ENCODE measurements at regions of chr12 and their contacts with region 1.

Region 1: DNA sequence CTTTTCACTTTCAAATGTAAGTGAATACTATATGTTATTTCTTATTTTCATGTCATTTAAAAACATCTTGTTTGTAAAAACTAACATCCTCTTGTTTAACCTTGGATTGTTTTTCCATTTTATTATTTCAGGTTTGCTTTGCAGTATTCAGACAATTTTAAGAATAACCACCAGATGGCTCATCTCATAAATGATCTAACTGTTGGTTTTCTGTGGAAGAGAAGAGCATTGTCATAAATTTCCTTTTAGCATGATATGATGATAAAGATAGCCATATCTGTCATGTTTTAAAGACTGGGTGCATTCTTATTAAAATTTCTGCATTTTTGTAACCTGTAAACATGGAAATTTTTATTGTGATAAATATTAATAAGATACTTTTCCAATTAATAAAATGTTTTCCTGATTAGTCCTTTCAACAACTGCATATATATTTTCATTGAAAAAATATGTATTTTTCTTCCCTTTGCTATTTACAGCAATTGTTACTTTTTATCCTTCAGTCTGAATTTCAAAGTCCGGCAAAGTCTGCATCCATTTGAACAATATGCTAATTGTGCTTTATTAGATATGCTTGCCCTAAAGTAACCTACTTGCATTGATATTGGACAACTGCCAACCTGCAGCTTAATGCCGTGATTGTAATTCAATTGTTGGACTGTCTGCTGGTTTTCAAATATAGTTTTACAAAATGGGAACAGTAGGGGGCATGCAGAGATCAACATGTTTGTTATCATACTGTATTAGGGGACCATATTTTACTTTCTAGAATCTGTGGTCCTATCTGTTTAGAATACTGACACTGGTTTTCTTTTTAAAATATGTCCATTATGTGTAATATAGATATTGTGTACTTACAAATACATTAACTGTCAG is 163.4 kb downstream of the GARIN6 start:
- DNase-seq: peak; percentile 51
- H3K4me3 Mint-ChIP-seq: no peak overlapping the region
- H3K27ac Mint-ChIP-seq: no peak overlapping the region
- H3K4me1 Mint-ChIP-seq: no peaks in the 10 kb centered on the region
- H3K27me3 Mint-ChIP-seq: no peaks in the 10 kb centered on the region
- CTCF ChIP-seq: no peak

Region 2: GRCh38 chr12:99984271-99985128 is 173.5 kb after region 1 on chr12 and contains the start of gene ANKS1B:
- CTCF ChIA-PET with region 1: no interaction called
- intact Hi-C with region 1: loop called (anchors 5 kb)
- DNase-seq: peak; percentile 67
- H3K4me3 Mint-ChIP-seq: peak within 1 kb of the TSS; percentile 79
- H3K27ac Mint-ChIP-seq: peak within 1 kb of the TSS; percentile 50
- H3K4me1 Mint-ChIP-seq: peaks cover 8% of the 10 kb centered on the region
- H3K27me3 Mint-ChIP-seq: peaks cover 18% of the 10 kb centered on the region
- CTCF ChIP-seq: no peak
- total RNA-seq, gene ANKS1B: 1.5 and 1.7 TPM in 2 replicates

Region 3: DNA sequence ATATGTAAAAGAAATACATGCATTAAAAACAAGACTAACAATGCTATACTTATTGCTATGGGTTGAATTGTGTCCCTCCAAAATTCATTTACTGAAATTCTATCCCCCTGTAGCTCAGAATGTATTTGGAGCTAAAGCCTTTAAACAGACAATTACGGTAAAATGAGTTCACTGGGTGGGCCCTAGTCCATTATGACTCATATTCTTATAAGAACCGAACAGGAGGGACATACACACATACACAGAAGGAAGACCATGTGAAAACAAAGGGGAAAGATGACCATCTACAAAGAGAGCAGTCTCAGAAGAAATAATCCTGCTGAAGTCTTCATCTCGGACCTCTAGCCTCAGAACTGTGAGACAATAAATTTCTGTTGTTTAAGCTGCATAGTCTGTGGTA is 250.9 kb after region 1 on chr12:
- CTCF ChIA-PET with region 1: no interaction called
- intact Hi-C with region 1: loop called (anchors 5 kb)
- DNase-seq: no peak
- H3K4me3 Mint-ChIP-seq: no peak overlapping the region
- H3K27ac Mint-ChIP-seq: no peak overlapping the region
- H3K4me1 Mint-ChIP-seq: no peaks in the 10 kb centered on the region
- H3K27me3 Mint-ChIP-seq: no peaks in the 10 kb centered on the region
- CTCF ChIP-seq: no peak

Region 4: GRCh38 chr12:100128512-100128908 is 317.6 kb after region 1 on chr12:
- CTCF ChIA-PET with region 1: no interaction called
- intact Hi-C with region 1: loop called (anchors 10 kb)
- DNase-seq: peak; percentile 19
- H3K4me3 Mint-ChIP-seq: no peak overlapping the region
- H3K27ac Mint-ChIP-seq: no peak overlapping the region
- H3K4me1 Mint-ChIP-seq: peaks cover 12% of the 10 kb centered on the region
- H3K27me3 Mint-ChIP-seq: no peaks in the 10 kb centered on the region
- CTCF ChIP-seq: no peak

Region 5: GRCh38 chr12:100200463-100201181 is 389.7 kb after region 1 on chr12 and contains the start of gene ACTR6:
- CTCF ChIA-PET with region 1: no interaction called
- intact Hi-C with region 1: loop called (anchors 10 kb)
- DNase-seq: peak; percentile 95
- H3K4me3 Mint-ChIP-seq: peak within 1 kb of the TSS; percentile 80
- H3K27ac Mint-ChIP-seq: peak within 1 kb of the TSS; percentile 96
- H3K4me1 Mint-ChIP-seq: no peaks in the 10 kb centered on the region
- H3K27me3 Mint-ChIP-seq: no peaks in the 10 kb centered on the region
- CTCF ChIP-seq: no peak
- total RNA-seq, gene ACTR6: 35.2 and 35.4 TPM in 2 replicates

Region 6: GRCh38 chr12:100229058-100229637 is 418.2 kb after region 1 on chr12:
- CTCF ChIA-PET with region 1: interaction called, 6 read pairs
- intact Hi-C with region 1: loop called (anchors 2 kb)
- DNase-seq: peak; percentile 24
- H3K4me3 Mint-ChIP-seq: peak overlapping the region; percentile 19
- H3K27ac Mint-ChIP-seq: peak overlapping the region; percentile 55
- H3K4me1 Mint-ChIP-seq: peaks cover 20% of the 10 kb centered on the region
- H3K27me3 Mint-ChIP-seq: no peaks in the 10 kb centered on the region
- CTCF ChIP-seq: no peak

Region 7: DNA sequence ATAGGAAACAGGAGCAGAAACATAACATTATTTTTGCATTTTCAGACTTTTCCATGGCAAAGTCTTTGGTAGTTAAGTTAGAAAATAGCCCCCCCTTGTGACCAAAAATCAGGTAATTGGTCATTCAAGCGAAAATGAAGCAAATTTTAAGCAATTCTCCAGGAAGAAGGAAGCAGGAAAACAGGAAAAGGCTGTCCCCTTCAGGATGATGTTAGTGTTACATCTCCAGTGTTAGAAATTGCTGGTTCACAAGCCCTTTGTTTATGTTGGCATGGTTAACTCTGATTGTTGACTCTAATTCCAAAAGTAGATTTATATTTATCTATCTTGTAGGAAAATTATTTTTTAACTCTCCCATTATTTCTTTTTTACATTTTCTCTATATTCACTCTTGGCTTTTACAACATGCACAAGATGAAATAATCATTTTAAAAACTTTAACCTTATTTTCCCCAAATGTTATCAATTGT is 743.7 kb after region 1 on chr12:
- CTCF ChIA-PET with region 1: no interaction called
- intact Hi-C with region 1: loop called (anchors 10 kb)
- DNase-seq: peak; percentile 74
- H3K4me3 Mint-ChIP-seq: no peak overlapping the region
- H3K27ac Mint-ChIP-seq: no peak overlapping the region
- H3K4me1 Mint-ChIP-seq: peaks cover 9% of the 10 kb centered on the region
- H3K27me3 Mint-ChIP-seq: no peaks in the 10 kb centered on the region
- CTCF ChIP-seq: peak; percentile 78